BJ (cell line): ENCODE measurements at regions of chr11 and their contacts with region 1.

Region 1: GRCh38 chr11:123188508-123189165 is 6.4 kb downstream of the CLMP start:
- DNase-seq: peak; percentile 49
- H3K4me3 ChIP-seq: peak overlapping the region; percentile 9
- H3K27me3 ChIP-seq: no peaks in the 10 kb centered on the region
- CTCF ChIP-seq: peak; percentile 23

Region 2: DNA sequence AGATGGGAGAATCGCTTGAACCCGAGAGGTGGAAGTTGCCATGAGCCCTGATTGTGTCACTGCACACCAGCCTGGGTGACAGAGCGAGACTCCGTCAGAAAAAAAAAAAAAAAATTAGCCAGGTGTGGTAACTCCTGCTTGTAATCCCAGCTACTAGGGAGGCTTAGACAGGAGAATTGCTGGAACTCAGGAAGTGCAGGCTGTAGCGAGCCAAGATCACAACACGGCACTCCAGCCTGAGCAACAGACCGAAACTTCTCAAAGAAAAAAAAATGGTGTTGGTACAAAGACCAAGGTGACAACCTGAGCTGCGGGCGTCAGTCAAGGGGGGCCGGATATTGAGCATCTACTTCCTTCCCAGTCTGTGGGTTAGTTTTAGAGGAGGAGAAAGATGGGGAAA is 78.3 kb before region 1 on chr11:
- CTCF ChIA-PET with region 1: interaction called, 11 read pairs
- POLR2A ChIA-PET with region 1: no interaction called
- DNase-seq: no peak
- H3K4me3 ChIP-seq: no peak overlapping the region
- H3K27me3 ChIP-seq: no peaks in the 10 kb centered on the region
- CTCF ChIP-seq: no peak

Region 3: DNA sequence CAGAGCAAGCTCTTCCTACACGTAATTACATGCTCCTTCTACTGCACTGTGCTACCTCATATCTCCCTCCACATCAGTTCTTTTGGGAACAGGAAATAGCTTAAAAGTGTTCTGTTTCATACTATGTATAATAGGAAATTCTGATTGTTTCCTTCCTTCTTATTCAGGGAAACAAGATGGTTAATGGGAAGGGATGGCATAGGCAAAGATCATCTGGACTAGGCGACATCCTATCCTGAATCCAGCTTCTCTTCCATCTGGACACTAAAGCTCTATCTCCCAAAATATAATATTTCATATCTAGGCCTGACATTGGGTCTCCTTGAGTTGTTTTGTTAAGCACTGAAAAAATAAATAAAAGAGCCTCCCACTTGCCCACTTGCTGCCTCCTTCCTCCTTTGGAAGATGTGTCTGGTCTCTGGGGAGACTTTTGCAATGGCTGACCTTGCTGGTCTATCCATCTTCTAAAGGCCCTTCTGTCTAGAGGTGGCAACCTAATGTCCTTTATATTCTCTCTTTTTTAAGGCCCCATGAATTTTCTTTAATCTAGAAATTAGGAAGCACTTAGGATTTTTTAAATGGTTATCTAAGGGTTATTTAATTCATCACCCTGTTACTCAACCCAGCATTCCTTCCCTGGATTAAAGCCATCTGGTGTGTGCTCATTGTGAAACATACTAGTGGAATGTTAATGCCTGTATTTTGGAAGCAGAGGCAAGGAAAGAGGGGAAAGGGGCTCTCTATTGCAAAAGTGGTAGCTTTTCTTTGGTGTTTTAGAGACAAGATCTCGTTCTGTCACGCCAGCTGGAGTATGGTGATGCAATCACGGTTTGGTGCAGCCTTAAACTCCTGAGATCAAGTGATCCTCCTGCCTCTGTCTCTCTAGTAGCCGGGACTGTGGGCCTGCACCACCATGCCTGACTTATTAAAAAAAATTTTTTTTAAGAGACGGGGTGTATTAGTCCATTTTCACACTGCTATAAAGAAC is 14.1 kb before region 1 on chr11:
- CTCF ChIA-PET with region 1: interaction called, 16 read pairs
- POLR2A ChIA-PET with region 1: interaction called, 3 read pairs
- DNase-seq: peak; percentile 99
- H3K4me3 ChIP-seq: no peak overlapping the region
- H3K27me3 ChIP-seq: no peaks in the 10 kb centered on the region
- CTCF ChIP-seq: no peak